ENCODE measurements at regions of chr6 and their contacts with region 1.

Region 1: DNA sequence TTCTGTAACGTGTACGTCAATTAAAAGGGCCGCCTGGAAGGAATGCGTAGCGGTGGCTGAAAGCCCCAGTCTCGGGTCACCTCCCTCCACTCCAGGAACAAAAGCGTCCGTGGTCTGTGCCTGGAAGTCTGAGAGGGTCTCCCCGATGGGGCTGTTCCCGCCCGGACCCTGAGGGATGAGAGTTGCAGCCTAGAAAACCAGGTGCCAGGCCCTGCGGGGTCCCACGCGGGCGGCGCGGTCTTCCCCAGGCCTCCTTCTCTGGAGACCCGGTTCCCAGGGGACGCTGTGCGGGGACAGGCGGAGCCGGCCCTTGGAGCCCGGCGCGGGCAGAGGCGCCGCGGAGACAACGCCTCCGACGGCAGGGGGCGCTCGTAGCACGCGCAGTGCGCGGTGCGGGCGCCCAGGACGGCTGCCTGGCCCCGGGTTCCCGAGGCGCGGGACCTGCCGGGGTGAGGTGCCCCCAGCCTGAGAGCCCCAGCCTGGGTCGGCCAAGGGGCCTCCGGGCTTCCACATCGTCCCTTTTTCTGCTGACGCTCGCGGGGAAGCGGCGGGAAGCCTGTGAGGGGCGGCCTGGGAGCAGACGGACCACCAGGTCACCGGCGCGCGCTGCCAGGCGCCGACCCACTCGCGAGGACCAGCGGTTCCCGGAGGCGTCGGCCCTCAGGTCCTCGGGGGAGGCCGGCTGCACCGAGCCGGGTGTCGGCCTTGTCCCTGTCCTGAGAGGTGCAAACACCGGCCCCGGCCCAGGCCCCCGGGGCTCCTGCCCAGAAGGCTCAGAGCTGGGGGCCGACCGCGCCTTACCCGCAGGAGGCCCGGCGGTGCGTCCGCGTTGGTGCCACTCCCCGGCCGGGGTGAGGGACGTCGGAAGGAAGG is 5.3 kb upstream of the FOXC1 start:
- DNase-seq: peak; percentile 78 to 88 (median 88)
- ATAC-seq: peak; percentile 86
- H3K4me3 ChIP-seq: peak overlapping the region; percentile 37
- H3K27ac ChIP-seq: no peak overlapping the region
- H3K4me1 ChIP-seq: no peaks in the 10 kb centered on the region
- H3K27me3 ChIP-seq: no peaks in the 10 kb centered on the region

Region 2: GRCh38 chr6:1739680-1740079 is 135.3 kb after region 1 on chr6:
- intact Hi-C with region 1: no loop called
- DNase-seq: no peak
- ATAC-seq: no peak
- H3K4me3 ChIP-seq: no peak overlapping the region
- H3K27ac ChIP-seq: no peak overlapping the region
- H3K4me1 ChIP-seq: no peaks in the 10 kb centered on the region
- H3K27me3 ChIP-seq: no peaks in the 10 kb centered on the region

Region 3: GRCh38 chr6:2103644-2104523 is 499.5 kb after region 1 on chr6:
- intact Hi-C with region 1: loop called (anchors 5 to 10 kb)
- DNase-seq: peak in 2 of 3 donors; percentile 25 to 55
- ATAC-seq: peak; percentile 87 to 89
- H3K4me3 ChIP-seq: peak overlapping the region; percentile 31
- H3K27ac ChIP-seq: peak overlapping the region; percentile 13
- H3K4me1 ChIP-seq: no peaks in the 10 kb centered on the region
- H3K27me3 ChIP-seq: no peaks in the 10 kb centered on the region

Region 4: GRCh38 chr6:2196079-2196679 is 591.8 kb after region 1 on chr6:
- intact Hi-C with region 1: loop called (anchors 5 to 10 kb)
- DNase-seq: no peak
- ATAC-seq: peak; percentile 71 to 83
- H3K4me3 ChIP-seq: no peak overlapping the region
- H3K27ac ChIP-seq: no peak overlapping the region
- H3K4me1 ChIP-seq: peaks cover 2% of the 10 kb centered on the region
- H3K27me3 ChIP-seq: no peaks in the 10 kb centered on the region

Region 5: GRCh38 chr6:2353412-2354137 is 749.2 kb after region 1 on chr6:
- intact Hi-C with region 1: loop called (anchors 5 to 10 kb)
- DNase-seq: peak; percentile 56 to 74 (median 68)
- ATAC-seq: peak; percentile 91 to 92
- H3K4me3 ChIP-seq: no peak overlapping the region
- H3K27ac ChIP-seq: no peak overlapping the region
- H3K4me1 ChIP-seq: no peaks in the 10 kb centered on the region
- H3K27me3 ChIP-seq: no peaks in the 10 kb centered on the region